PC-3 (cell line): ENCODE measurements at regions of chr20 and their contacts with region 1.

Region 1: GRCh38 chr20:58938541-58938940 is 42.5 kb upstream of the NELFCD start:
- DNase-seq: no peak
- ATAC-seq: no peak
- H3K4me3 ChIP-seq: no peak overlapping the region
- H3K27ac ChIP-seq: no peak overlapping the region
- H3K4me1 ChIP-seq: no peaks in the 10 kb centered on the region
- H3K27me3 ChIP-seq: peaks cover 80% of the 10 kb centered on the region
- CTCF ChIP-seq: no peak

Region 2: GRCh38 chr20:58907399-58908137 is 31.0 kb before region 1 on chr20:
- CTCF ChIA-PET with region 1: no interaction called
- POLR2A ChIA-PET with region 1: interaction called, 11 read pairs
- intact Hi-C with region 1: no loop called
- DNase-seq: peak; percentile 29
- ATAC-seq: no peak
- H3K4me3 ChIP-seq: no peak overlapping the region
- H3K27ac ChIP-seq: no peak overlapping the region
- H3K4me1 ChIP-seq: no peaks in the 10 kb centered on the region
- H3K27me3 ChIP-seq: no peaks in the 10 kb centered on the region
- CTCF ChIP-seq: no peak

Region 3: DNA sequence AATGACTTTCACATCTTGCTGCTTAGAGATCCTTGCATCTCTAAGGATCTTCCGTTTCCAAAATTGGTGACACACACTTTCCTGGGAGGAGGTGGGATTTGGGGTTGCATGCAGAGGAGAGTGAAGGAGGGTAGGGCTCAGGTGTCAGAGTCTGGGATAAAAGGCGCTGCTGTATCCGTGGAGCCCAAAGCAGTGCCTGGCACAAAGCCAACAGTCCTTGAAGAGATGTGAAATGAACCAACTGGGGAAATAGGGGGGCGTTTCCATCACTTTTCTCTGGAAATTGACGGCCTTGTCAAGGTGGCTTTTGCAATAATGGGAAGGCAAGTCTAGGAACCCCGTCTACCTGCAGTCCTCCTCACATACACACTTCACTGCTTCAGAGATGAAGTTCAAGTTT is 17.0 kb before region 1 on chr20:
- CTCF ChIA-PET with region 1: no interaction called
- POLR2A ChIA-PET with region 1: interaction called, 15 read pairs
- intact Hi-C with region 1: no loop called
- DNase-seq: no peak
- ATAC-seq: no peak
- H3K4me3 ChIP-seq: no peak overlapping the region
- H3K27ac ChIP-seq: no peak overlapping the region
- H3K4me1 ChIP-seq: no peaks in the 10 kb centered on the region
- H3K27me3 ChIP-seq: peaks cover 26% of the 10 kb centered on the region; the same call in 1 of the 2 replicates
- CTCF ChIP-seq: no peak

Region 4: DNA sequence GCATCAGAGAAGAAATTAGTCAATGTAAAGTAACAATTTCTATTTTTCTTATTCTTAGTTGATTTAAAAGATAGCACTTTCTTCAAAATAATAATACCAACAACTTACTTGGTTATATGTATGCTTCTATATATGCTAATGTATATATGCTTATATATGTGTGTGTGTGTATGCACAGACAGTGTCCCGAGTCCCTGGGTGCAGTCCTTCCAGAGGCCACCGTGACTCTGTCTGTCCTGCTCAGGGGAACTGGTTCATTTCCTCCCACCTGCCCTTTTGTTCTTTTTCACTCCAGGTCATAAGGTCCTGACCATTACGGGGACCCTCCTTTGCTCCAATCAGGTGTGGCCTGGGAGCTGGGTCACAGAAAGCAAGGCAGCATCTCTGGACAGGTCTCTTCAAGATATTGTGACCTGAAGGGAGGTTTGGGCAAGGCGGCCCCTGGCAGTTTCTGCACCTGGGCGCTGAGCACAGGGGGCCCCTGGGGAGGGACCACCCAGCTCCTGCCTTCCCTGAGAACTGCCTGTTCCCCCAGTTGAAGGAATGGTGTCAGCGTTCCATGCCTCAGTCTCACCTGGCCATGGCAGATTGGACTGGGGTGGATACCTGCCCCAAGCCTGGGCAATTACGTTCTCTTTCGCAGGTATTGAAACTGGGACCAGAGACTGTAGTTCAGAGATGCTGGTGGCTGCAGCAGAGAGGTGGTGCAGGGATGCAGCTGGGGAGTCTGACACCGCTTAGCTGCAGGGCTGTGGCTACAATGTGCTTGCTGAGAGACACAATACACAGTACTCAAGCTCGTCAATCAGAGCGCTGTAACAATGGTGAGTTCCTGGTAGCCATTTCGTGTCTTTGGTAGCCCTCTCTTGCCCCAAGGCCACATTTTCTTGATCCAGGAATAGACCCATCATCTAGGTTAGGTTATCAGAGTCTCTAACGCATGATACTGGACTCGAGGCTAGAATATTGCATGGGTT is 26.8 kb after region 1 on chr20:
- CTCF ChIA-PET with region 1: interaction called, 12 read pairs
- POLR2A ChIA-PET with region 1: no interaction called
- intact Hi-C with region 1: no loop called
- DNase-seq: no peak
- ATAC-seq: no peak
- H3K4me3 ChIP-seq: no peak overlapping the region
- H3K27ac ChIP-seq: no peak overlapping the region
- H3K4me1 ChIP-seq: no peaks in the 10 kb centered on the region
- H3K27me3 ChIP-seq: peaks cover 76% of the 10 kb centered on the region
- CTCF ChIP-seq: no peak

Region 5: GRCh38 chr20:59006864-59007664 is 68.5 kb after region 1 on chr20 and contains the start of gene CTSZ:
- CTCF ChIA-PET with region 1: no interaction called
- POLR2A ChIA-PET with region 1: no interaction called
- intact Hi-C with region 1: no loop called
- DNase-seq: peak; percentile 54
- ATAC-seq: peak; percentile 73
- H3K4me3 ChIP-seq: peak within 1 kb of the TSS; percentile 96
- H3K27ac ChIP-seq: no peak within 1 kb of the TSS
- H3K4me1 ChIP-seq: peaks cover 40% of the 10 kb centered on the region
- H3K27me3 ChIP-seq: no peaks in the 10 kb centered on the region
- CTCF ChIP-seq: no peak
- total RNA-seq, gene CTSZ: 191 and 225 TPM in 2 replicates